ENCODE measurements at regions of chr16 and their contacts with region 1.

Region 1: DNA sequence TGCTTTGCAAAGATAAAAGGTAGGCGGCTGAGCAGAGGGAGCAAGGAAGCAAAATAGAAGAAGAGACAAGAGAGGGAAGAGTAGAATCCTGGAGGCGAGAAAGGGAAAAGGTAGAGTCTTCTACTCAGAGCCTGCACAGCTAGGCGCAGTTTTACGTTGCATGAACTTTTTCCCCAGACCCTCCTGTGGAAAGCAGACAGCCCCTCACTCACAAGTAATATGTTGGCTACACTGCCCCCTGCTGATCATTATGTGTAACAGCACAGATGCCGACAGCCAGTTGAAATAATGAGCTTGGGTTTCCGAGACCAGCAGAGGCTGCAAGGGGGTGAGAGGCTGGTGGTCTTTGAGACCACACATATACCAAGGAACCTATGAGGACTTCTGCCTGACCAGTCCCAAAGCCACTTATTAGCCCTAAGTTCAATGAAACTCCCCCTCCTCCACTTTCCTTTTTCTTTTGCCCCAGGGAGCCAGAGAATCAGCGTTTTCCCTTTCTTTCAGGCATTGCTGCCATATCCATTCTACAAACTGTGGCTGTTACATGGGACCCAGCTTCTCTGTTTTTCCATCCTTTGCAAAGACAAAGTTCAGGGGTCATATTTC is 22.5 kb upstream of the CMTR2 start:
- DNase-seq: peak; percentile 61
- H3K4me3 ChIP-seq: no peak overlapping the region; a peak in 1 of 4 replicates
- H3K27ac ChIP-seq: no peak overlapping the region
- H3K4me1 ChIP-seq: no peaks in the 10 kb centered on the region
- H3K27me3 ChIP-seq: no peaks in the 10 kb centered on the region
- CTCF ChIP-seq: peak; percentile 85
- EP300 ChIP-seq: no peak
- RAD21 ChIP-seq: peak; percentile 88

Region 2: DNA sequence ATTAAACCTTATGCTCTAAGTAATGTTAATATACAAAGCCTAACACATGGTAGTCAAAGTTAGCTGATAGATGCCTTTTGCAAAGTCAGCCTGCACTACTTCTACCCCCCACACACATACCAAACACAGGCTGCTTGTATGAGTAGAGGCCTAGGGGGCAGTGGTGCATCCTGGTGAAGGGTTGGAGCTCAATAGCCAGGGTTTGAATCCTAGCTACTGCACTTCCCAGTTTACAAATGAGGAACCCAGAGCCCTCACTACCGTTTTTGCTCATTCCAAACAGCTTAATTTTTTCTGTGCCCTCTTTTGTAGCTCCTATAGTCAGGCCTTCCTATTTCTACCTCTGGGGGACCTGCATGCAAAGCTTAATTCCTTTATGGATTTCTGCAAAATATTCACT is 62.3 kb before region 1 on chr16:
- CTCF ChIA-PET with region 1: interaction called, 10 read pairs
- POLR2A ChIA-PET with region 1: no interaction called
- DNase-seq: no peak
- H3K4me3 ChIP-seq: no peak overlapping the region
- H3K27ac ChIP-seq: no peak overlapping the region
- H3K4me1 ChIP-seq: no peaks in the 10 kb centered on the region
- H3K27me3 ChIP-seq: no peaks in the 10 kb centered on the region
- CTCF ChIP-seq: no peak
- EP300 ChIP-seq: no peak
- RAD21 ChIP-seq: no peak

Region 3: DNA sequence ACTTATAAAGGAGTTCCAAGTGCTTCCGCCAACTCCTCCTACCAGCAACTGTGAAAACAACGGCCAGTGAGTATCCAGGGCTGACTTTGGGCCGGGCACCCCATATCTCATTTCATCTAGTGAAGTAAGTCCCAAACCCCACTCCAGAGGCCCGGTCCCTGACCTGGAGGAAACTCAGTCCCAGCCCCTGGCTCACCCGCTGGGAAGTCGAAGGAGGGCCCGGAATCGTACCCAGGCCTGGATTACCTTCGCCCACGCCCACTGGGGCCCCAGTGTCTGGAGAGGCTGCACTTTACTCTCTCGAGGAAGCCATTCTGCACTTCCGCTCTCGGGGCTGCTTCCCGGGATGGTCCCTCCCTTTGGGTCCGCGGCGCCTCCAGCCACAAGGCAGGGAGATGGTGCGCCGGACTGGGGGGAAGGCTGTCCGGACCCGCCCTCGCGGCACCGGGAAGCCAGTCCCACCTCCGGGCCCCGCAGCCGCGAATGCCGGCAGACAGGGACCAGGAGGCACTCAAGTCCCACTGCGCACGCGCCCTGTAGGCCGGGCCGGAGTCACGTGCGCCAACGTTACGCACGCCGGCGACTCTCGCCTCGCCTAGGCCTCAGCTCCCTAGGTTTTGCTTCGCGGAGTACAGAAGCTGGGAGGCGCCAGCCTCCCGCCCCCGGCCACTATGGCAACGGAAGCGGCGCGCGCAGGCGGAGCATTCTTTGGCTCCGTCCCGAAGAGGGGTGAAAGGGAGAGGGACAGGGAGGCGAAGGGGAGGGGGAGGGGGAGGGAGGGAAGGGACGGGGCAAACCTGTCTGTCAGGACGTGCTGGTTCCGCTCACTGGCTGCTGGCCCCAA is 22.5 kb before region 1 on chr16 and contains the start of gene CMTR2:
- CTCF ChIA-PET with region 1: interaction called, 18 read pairs
- POLR2A ChIA-PET with region 1: no interaction called
- DNase-seq: peak; percentile 96
- H3K4me3 ChIP-seq: peak within 1 kb of the TSS; percentile 80 to 96
- H3K27ac ChIP-seq: peak within 1 kb of the TSS; percentile 84 to 94
- H3K4me1 ChIP-seq: peaks cover 0 to 7% of the 10 kb centered on the region in 2 experiments; a peak in 2 of 4 replicates
- H3K27me3 ChIP-seq: no peaks in the 10 kb centered on the region
- CTCF ChIP-seq: no peak
- EP300 ChIP-seq: no peak
- RAD21 ChIP-seq: 0 out of 2 replicates have a peak, but pooled peaks have one; percentile 1
- polyA plus RNA-seq, gene CMTR2: 7.2 and 9.6 TPM in 2 replicates

Region 4: DNA sequence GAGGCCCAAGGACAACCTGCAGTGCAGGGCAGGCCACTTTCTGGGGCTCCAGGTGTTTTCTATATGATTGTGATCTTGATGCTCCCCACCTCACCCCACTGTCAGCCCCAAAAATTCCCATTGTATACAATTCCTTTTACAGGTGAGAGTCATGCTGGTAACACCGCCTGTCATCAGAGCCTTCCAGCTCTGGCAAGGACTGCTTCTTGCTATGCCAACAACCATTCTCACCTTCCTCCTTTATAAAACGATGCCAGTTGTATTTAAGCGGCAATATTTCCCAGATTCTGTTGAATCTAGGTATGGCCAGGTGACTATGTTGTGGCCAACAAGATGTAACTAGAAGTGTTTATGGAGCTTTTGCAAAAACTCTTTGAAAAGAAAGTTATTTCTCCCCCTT is 16.5 kb after region 1 on chr16:
- CTCF ChIA-PET with region 1: interaction called, 22 read pairs
- POLR2A ChIA-PET with region 1: no interaction called
- DNase-seq: no peak
- H3K4me3 ChIP-seq: no peak overlapping the region
- H3K27ac ChIP-seq: no peak overlapping the region
- H3K4me1 ChIP-seq: no peaks in the 10 kb centered on the region
- H3K27me3 ChIP-seq: no peaks in the 10 kb centered on the region
- CTCF ChIP-seq: no peak
- EP300 ChIP-seq: no peak
- RAD21 ChIP-seq: no peak